Endothelial cell of umbilical vein (primary cell): ENCODE measurements at regions of chr6 and their contacts with region 1.

Region 1: GRCh38 chr6:17505062-17505476 is 95.0 kb upstream of the FAM8A1 start:
- DNase-seq: peak; percentile 25
- H3K4me3 ChIP-seq: no peak overlapping the region
- H3K27ac ChIP-seq: no peak overlapping the region
- H3K4me1 ChIP-seq: no peaks in the 10 kb centered on the region
- H3K27me3 ChIP-seq: no peaks in the 10 kb centered on the region
- CTCF ChIP-seq: peak; percentile 4 to 6
- POLR2A ChIP-seq: no peak

Region 2: GRCh38 chr6:17311595-17312311 is 193.3 kb before region 1 on chr6:
- CTCF ChIA-PET with region 1: no interaction called
- POLR2A ChIA-PET with region 1: no interaction called
- dilution Hi-C with region 1: no loop called
- intact Hi-C with region 1: no loop called
- DNase-seq: no peak
- H3K4me3 ChIP-seq: no peak overlapping the region
- H3K27ac ChIP-seq: no peak overlapping the region
- H3K4me1 ChIP-seq: no peaks in the 10 kb centered on the region
- H3K27me3 ChIP-seq: no peaks in the 10 kb centered on the region
- CTCF ChIP-seq: no peak
- POLR2A ChIP-seq: no peak

Region 3: GRCh38 chr6:17530321-17530835 is 25.3 kb after region 1 on chr6:
- CTCF ChIA-PET with region 1: interaction called, 5 read pairs
- POLR2A ChIA-PET with region 1: no interaction called
- dilution Hi-C with region 1: no loop called
- intact Hi-C with region 1: loop called (anchors 2 kb)
- DNase-seq: no peak
- H3K4me3 ChIP-seq: no peak overlapping the region
- H3K27ac ChIP-seq: no peak overlapping the region
- H3K4me1 ChIP-seq: no peaks in the 10 kb centered on the region
- H3K27me3 ChIP-seq: no peaks in the 10 kb centered on the region
- CTCF ChIP-seq: no peak
- POLR2A ChIP-seq: no peak